Panc1 (cell line): ENCODE measurements at regions of chr19 and their contacts with region 1.

Region 1: DNA sequence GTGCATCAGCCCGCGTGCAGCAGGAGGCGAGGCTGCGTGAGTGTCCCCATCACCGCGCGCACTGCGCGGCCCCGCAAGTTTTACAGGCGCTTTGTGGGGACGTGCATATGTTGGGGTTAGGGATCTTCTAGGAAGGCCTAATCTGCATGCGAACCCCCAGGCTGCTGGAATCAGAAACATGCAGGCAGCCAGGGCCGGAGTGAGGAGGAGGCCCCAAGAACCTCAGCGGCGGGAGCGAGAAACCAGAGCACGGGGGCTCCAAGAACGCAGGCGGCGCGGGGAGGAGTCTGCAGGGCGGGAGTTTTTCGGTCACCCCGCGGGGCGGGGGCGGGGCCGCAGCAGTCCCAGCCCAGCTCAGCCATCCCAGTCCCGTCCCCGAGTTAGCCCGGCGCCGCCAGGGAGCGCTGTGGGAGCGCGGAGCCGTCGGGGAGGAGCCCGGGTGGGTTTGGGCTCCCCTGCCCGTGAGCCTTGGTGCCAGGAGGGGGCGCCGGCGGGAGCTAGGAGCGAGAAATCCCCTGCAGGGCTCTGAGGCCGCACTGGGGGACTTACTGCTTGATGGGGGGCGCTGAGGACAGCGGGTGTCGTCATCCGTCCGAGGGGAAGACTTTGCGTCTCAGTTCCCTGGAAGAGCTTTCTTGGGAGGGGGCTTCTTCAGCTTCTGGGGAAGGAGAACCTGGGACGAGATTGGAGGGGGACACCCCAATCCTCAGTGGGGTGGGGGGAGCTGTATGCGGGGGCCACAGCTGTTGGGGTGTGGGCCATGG is 933 bp upstream of the NRTN start:
- DNase-seq: peak; percentile 56
- ATAC-seq: peak; percentile 91
- H3K4me3 ChIP-seq: peak overlapping the region; percentile 30 to 54
- H3K27ac ChIP-seq: no peak overlapping the region
- H3K4me1 ChIP-seq: peaks cover 4% of the 10 kb centered on the region
- H3K27me3 ChIP-seq: no peaks in the 10 kb centered on the region
- CTCF ChIP-seq: peak; percentile 98

Region 2: DNA sequence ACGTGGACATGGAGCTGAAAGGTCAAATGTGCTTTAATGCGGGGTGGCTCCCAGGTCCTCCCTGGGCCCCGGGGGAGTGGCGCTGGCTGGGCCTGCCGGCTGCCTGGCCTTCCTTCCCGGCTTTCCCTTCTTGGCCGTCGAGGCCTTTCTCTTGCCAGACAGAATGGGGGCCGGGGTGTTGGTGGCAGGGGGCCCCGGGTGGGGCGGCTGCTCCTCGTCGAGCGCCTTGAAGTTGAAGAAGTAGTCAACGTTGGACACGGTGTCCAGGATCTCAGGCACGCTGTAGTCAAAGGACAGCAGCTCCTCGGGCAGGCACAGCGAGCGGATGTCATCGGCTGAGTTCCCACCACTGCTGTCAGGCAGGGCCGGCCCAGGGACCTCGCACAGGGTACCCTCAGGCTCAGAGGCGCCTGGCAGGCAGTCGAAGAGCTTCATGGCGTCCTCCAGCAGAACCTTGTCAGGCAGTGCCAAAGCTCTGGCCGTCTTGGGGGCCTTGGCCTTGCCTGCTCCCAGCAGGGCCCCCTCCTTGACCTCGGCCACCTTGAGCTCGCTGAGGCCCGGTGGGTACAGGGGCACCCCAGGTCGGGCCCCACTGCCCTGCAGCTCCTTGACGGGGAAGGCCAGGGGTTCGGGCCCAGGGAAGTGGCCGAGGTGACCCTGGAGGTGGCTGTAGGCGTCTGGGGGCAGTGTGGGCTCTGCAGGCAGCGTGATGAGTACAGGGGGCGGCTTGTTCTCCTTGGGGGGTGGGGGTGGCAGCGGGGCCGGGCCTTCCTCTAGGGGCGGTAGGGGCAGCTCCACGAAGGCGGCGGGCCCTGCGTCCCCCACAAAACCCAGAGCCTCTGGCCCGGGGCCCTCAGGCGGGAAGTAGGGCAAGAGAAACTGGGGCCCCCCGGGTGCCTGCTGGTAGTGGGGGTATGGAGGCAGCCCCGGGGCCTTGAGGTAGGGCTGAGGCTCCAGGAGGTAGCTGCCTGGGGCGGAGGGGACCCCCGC is 20.7 kb before region 1 on chr19:
- CTCF ChIA-PET with region 1: no interaction called
- POLR2A ChIA-PET with region 1: no interaction called
- in situ Hi-C with region 1: no loop called
- intact Hi-C with region 1: no loop called
- DNase-seq: no peak
- ATAC-seq: 0 out of 2 replicates have a peak, but pooled peaks have one; percentile 36
- H3K4me3 ChIP-seq: no peak overlapping the region
- H3K27ac ChIP-seq: no peak overlapping the region
- H3K4me1 ChIP-seq: no peaks in the 10 kb centered on the region
- H3K27me3 ChIP-seq: no peaks in the 10 kb centered on the region
- CTCF ChIP-seq: no peak

Region 3: DNA sequence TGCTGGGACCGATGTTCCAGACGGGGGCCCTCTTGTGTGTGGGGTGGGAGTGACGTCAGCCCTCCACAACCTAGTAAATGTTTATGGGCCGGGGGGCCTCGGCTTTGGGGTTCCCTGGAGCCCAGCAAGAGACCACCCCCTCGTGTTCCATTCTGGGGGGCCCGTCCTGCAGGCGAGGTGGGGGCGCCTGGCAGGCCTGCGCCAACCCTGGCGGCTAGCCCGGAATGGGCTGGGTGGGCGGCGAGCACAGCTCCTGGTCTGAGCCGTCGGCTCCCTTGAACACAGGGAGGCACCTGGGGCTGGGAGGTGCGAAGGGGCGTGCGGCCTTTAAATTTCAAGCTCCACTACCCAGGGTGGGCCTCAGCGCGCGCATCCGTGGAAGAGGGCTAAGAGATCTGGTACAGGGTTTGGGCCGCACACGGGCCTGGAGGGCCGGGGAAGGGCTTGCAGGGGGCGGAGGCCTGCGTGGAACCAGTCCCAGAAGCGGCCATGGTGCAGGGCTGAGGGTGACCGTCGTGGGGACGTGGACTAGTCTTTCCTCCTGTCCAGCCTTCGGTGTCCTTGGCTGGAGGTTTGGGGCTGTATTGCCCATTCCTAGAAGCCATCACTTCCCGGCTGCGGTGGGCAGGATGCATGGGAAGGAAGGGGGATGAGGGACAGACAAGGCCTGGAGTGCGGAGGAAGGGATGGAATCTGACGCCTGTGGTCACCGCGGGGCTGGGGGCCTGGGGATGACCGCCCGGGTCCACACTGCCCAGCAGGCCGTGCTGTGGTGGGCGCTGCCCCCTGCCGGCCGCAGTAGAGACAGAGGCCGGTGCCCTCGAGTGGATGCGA is 88.2 kb after region 1 on chr19:
- CTCF ChIA-PET with region 1: interaction called, 3 read pairs
- POLR2A ChIA-PET with region 1: no interaction called
- in situ Hi-C with region 1: no loop called
- intact Hi-C with region 1: loop called (anchors 10 kb)
- DNase-seq: no peak
- ATAC-seq: peak; percentile 71
- H3K4me3 ChIP-seq: no peak overlapping the region
- H3K27ac ChIP-seq: no peak overlapping the region
- H3K4me1 ChIP-seq: no peaks in the 10 kb centered on the region
- H3K27me3 ChIP-seq: no peaks in the 10 kb centered on the region
- CTCF ChIP-seq: peak; percentile 77